Transverse colon (tissue), 4 donors: ENCODE measurements at regions of chr18 and their contacts with region 1.

Region 1: GRCh38 chr18:45654677-45655076 is 39.4 kb downstream of the SLC14A2 start:
- DNase-seq: no peak
- H3K4me3 ChIP-seq: no peak overlapping the region
- H3K27ac ChIP-seq: no peak overlapping the region
- H3K4me1 ChIP-seq: no peaks in the 10 kb centered on the region
- H3K27me3 ChIP-seq: no peaks in the 10 kb centered on the region
- CTCF ChIP-seq: no peak
- EP300 ChIP-seq: no peak
- POLR2A ChIP-seq: no peak

Region 2: DNA sequence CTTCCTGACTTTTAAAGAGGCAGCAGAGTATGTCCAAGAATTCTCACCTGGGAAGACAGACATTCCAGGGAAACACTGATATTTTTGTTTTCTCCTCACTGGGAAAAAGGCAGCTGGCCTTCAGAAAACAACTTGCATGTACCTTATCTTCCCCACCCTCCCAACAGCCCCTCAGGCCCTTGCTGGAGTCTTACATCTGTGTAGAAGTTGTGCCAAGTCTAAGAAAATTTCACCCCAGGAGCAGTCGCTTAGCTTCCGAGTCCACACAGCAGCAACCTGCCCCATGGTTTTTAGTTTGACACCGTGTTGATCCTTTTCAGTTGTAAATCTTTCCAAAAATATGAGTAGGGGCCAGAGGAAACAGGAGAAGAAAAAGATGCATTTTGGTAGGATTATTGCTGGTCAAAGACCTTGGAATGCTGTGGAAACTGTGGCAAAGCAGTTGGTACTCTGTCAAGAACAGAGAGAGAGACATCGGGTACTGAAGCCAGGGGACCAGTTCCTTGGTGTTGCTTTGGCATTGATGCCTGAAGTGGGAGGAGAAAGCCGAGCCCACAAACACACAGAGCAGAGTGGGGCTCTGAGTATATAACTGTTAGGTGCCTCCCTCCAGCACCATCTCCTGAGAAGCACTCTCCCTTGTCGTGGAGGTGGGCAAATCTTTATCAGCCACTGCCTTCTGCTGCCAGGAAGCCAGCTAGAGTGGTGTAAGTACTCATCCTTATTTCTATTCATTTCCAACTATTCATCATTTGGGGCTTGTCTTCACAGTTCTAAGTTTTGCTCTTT is 69.1 kb after region 1 on chr18 and contains the start of gene SLC14A1:
- in situ Hi-C with region 1: no loop called
- intact Hi-C with region 1: loop called (anchors 2 kb)
- DNase-seq: no peak
- H3K4me3 ChIP-seq: no peak within 1 kb of the TSS
- H3K27ac ChIP-seq: no peak within 1 kb of the TSS
- H3K4me1 ChIP-seq: no peaks in the 10 kb centered on the region
- H3K27me3 ChIP-seq: peaks cover 5% of the 10 kb centered on the region
- CTCF ChIP-seq: no peak
- EP300 ChIP-seq: no peak
- POLR2A ChIP-seq: no peak
- total RNA-seq, gene SLC14A1: 0.75 to 2.9 (median 0.95) TPM in 3 of 4 donors, not detected in the other

Region 3: DNA sequence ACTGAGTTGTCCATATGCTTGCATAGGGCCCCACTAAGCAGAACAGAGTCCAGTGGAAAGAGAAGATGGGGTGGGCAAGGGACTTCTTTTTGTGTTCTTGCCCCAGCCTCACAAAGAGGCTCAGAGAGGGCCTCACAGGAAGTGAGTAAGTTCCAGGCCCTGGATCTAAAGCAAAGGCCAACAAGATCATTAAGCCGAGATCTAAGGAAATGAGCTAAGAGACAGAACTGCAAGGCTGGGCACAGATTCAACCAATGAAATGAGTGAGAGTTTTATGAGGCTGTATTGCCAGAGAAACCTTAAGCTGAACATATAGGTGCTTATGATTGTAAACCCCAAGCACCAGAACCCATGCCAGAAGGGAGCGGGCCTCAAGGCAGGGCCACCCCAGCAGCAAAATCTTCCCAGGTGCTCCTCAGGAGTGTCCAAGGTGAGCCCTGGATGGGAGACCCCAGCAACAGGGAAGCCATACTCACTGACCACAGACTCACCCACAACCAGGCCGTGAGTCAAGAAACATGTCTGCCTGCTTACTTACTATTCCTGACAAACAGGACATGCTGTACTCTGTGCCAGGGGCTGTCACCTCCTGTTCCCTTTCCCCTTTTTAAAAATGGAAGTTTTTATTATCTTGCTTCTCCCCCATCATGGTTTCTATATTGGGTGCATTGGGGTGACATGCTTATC is 109.5 kb after region 1 on chr18:
- in situ Hi-C with region 1: no loop called
- intact Hi-C with region 1: no loop called
- DNase-seq: no peak
- H3K4me3 ChIP-seq: no peak overlapping the region
- H3K27ac ChIP-seq: no peak overlapping the region
- H3K4me1 ChIP-seq: no peaks in the 10 kb centered on the region
- H3K27me3 ChIP-seq: peaks cover 9% of the 10 kb centered on the region
- CTCF ChIP-seq: no peak
- EP300 ChIP-seq: no peak
- POLR2A ChIP-seq: no peak

Region 4: DNA sequence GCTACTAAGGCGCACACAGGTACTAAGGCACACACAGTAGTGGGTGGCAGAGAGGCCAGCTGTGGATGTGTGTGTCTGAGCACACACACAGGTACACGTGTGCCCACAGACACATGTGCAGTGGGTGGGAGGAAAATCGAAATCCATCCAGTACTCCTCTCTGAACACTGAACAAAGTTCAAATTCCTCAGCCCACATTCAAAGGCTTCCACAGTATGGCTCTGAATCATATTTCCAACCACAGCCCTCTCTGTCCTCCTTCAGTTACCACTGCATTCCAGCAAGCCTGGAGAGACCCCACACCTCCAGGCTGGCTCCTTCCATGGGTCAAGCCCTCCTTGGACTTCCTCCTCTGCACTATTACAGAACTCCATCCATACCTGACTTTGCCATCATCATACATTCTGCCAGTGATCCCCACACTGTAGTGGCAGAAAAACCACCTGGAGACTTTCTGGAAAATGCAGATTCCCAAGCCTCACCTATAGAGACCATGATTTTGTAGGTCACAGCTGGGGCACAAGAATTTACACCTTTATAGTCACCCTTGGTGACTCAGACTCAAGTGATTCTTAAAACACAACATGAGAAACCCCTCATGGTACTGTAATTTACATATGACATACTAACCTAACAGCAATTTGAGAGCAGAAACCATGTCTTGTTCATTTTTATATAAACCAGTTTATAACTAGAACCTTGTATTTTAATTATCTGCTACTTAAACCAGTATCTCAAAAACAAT is 281.1 kb after region 1 on chr18:
- in situ Hi-C with region 1: no loop called
- intact Hi-C with region 1: no loop called
- DNase-seq: no peak
- H3K4me3 ChIP-seq: no peak overlapping the region
- H3K27ac ChIP-seq: no peak overlapping the region
- H3K4me1 ChIP-seq: no peaks in the 10 kb centered on the region
- H3K27me3 ChIP-seq: no peaks in the 10 kb centered on the region
- CTCF ChIP-seq: no peak
- EP300 ChIP-seq: no peak
- POLR2A ChIP-seq: no peak